B cell (primary cell): ENCODE measurements at regions of chr1 and their contacts with region 1.

Region 1: DNA sequence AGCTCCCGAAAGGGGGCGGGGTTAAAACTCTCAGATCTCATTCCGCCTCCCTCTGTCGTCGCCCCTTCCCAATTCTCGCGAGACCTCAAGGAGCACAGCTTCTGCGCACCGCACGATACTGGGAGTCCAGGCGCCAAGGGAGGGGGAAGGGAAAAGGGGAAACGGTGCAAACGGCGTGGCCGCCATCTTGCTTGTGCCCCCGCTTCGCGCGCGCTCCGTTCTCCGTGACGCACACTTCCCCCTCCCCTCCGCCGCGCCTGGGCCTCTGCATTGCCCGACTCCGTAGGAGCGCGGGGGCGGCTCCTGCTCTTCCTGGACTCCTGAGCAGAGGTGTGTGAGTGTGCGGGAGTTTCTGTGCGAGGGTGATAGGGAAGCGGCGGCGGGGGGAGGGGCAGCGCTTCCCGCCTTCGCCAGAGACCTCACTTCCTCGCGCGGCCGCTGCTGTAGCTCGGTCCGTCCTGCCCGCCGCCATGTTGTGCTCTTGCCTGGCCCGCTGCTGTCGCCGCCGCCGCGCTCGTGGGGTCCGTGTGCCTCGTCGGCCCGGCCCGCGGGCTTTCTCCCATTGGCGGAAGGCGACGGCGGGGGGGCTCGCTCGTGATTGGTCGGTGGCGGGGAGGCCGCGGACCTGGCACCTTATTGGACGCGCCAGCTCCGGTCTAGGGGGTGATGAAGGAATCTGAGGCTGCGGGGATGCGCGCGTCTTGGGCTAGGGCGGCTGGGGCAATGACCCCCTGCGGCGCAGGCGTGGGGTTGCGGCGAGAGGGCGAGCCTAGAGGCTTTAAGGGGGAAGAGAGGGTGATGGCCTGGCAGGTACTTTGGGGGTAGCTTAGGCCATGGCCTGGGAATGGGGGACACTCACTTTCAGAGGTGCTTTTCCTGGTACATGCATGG is at the start of gene NFYC:
- DNase-seq: peak; percentile 99
- ATAC-seq: peak; percentile 78
- H3K4me3 ChIP-seq: peak within 1 kb of the TSS; percentile 75 to 94 (median 91)
- H3K4me3 Mint-ChIP-seq: peak within 1 kb of the TSS; percentile 98
- H3K27ac ChIP-seq: peak within 1 kb of the TSS; percentile 99 to 100
- H3K27ac Mint-ChIP-seq: peak within 1 kb of the TSS; percentile 97
- H3K4me1 ChIP-seq: peaks cover 35 to 44% of the 10 kb centered on the region in 2 donors
- H3K4me1 Mint-ChIP-seq: peaks cover 66% of the 10 kb centered on the region
- H3K27me3 ChIP-seq: no peaks in the 10 kb centered on the region
- H3K27me3 Mint-ChIP-seq: no peaks in the 10 kb centered on the region
- CTCF ChIP-seq: no peak
- total RNA-seq, gene NFYC: 81.1 and 88.7 TPM in 2 replicates

Region 2: GRCh38 chr1:40385437-40386358 is 306.1 kb before region 1 on chr1:
- CTCF ChIA-PET with region 1: no interaction called
- POLR2A ChIA-PET with region 1: no interaction called
- intact Hi-C with region 1: loop called (anchors 10 kb)
- DNase-seq: peak; percentile 94
- ATAC-seq: peak; percentile 73
- H3K4me3 ChIP-seq: peak overlapping the region; percentile 30 to 70 (median 31)
- H3K4me3 Mint-ChIP-seq: peak overlapping the region; percentile 87
- H3K27ac ChIP-seq: peak overlapping the region; percentile 99 to 100
- H3K27ac Mint-ChIP-seq: peak overlapping the region; percentile 97
- H3K4me1 ChIP-seq: peaks cover 94 to 98% of the 10 kb centered on the region in 2 donors
- H3K4me1 Mint-ChIP-seq: peaks cover 91% of the 10 kb centered on the region
- H3K27me3 ChIP-seq: no peaks in the 10 kb centered on the region
- H3K27me3 Mint-ChIP-seq: no peaks in the 10 kb centered on the region
- CTCF ChIP-seq: no peak

Region 3: DNA sequence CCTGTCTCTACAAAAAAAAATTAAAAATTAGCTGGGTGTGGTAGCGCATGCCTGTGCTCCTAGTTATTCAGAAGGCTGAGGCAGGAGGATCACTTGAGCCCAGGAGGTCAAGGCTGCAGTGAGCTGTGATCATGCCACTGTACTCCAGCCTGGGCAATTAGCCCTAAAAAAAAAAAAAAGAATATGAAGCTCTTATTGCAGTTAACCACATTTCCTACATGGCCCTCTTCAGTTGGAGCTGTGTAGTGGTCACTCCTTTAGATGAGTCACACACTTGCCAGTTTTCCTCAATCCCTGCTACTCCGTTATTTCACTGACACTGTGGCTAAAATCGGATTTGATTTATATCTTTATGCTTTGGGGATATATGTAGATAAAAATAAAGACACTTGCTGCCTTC is 11.5 kb after region 1 on chr1:
- CTCF ChIA-PET with region 1: interaction called, 11 read pairs
- POLR2A ChIA-PET with region 1: interaction called, 9 read pairs
- intact Hi-C with region 1: no loop called
- DNase-seq: no peak
- ATAC-seq: no peak
- H3K4me3 ChIP-seq: no peak overlapping the region
- H3K4me3 Mint-ChIP-seq: no peak overlapping the region
- H3K27ac ChIP-seq: no peak overlapping the region
- H3K27ac Mint-ChIP-seq: no peak overlapping the region
- H3K4me1 ChIP-seq: peaks cover 47 to 71% of the 10 kb centered on the region in 2 donors
- H3K4me1 Mint-ChIP-seq: peaks cover 71% of the 10 kb centered on the region
- H3K27me3 ChIP-seq: no peaks in the 10 kb centered on the region
- H3K27me3 Mint-ChIP-seq: no peaks in the 10 kb centered on the region
- CTCF ChIP-seq: no peak

Region 4: DNA sequence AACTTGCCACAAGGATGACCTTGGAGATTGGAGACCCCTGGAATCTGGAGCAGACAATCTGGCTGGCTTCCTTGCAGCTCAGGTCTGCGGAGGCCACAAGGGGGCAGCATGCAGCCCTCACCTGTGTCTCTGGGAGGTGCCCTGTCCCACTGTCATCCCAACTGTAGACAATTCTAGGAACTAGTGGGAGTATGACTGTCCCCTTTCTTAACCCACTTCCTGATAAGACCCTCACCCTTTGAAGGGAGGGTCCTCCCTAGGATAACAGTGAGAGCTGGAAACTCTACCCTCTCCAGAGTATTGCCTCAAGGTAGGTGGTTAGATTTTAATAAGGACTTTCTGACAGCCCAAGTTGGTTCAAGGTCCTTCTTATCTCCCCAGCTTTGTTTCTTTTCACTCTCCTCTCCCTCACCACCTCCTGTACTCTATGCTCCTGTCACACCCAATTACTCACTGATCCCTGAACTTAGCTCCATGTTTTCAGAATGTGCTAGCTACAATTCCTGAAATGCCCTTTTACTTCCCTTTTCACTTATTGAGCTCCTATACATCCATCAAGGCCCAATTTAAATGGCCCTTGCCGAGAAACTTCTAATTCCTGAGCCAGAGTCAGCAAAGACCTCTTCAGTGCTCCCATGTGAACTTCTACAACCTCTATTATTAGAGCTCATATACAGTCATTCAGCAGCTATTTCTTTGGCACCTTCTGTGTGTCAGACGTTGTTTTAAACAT is 82.6 kb after region 1 on chr1:
- CTCF ChIA-PET with region 1: interaction called, 31 read pairs
- POLR2A ChIA-PET with region 1: no interaction called
- intact Hi-C with region 1: no loop called
- DNase-seq: peak; percentile 73
- ATAC-seq: peak; percentile 49
- H3K4me3 ChIP-seq: no peak overlapping the region
- H3K4me3 Mint-ChIP-seq: no peak overlapping the region
- H3K27ac ChIP-seq: no peak overlapping the region
- H3K27ac Mint-ChIP-seq: no peak overlapping the region
- H3K4me1 ChIP-seq: no peaks in the 10 kb centered on the region
- H3K4me1 Mint-ChIP-seq: peaks cover 2% of the 10 kb centered on the region
- H3K27me3 ChIP-seq: no peaks in the 10 kb centered on the region
- H3K27me3 Mint-ChIP-seq: no peaks in the 10 kb centered on the region
- CTCF ChIP-seq: peak; percentile 85

Region 5: DNA sequence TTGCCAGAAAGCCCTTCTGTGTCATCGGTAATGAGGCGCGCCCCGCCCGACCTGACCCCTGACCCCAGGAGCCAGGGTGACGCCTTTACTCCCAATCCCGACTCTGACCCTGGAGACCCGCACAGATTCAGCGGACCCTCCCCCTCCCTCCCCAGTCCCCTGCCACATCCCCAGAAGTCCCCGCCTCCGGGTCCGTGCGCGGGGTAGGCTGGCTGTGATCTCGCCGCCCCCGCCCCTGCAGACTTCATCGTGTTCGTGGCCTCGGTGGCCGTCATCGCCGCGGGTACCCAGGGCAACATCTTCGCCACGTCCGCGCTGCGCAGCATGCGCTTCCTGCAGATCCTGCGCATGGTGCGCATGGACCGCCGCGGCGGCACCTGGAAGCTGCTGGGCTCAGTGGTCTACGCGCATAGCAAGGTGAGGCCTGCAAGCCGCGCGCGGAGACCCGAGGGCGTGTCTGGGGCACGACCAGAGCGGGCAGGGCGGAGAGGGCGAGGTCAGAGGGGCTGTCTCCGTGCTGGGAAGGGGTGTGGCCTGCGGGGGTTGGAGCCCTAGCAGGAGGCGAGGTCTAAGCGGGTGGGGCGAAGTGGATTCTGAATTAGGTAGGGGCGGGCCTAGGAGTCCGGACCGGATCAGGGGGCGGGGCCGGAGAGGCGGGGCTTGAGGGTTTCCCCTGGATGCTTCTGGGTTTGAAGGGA is 126.6 kb after region 1 on chr1:
- CTCF ChIA-PET with region 1: interaction called, 3 read pairs
- POLR2A ChIA-PET with region 1: no interaction called
- intact Hi-C with region 1: loop called (anchors 5 kb)
- DNase-seq: peak; percentile 91
- ATAC-seq: peak; percentile 99
- H3K4me3 ChIP-seq: peak overlapping the region; percentile 5 to 77 (median 62)
- H3K4me3 Mint-ChIP-seq: peak overlapping the region; percentile 88
- H3K27ac ChIP-seq: peak overlapping the region in 1 of 2 donors; percentile 10
- H3K27ac Mint-ChIP-seq: peak overlapping the region; percentile 79
- H3K4me1 ChIP-seq: peaks cover 0 to 11% of the 10 kb centered on the region in 2 donors
- H3K4me1 Mint-ChIP-seq: peaks cover 11% of the 10 kb centered on the region
- H3K27me3 ChIP-seq: peaks cover 0 to 6% (median 0%) of the 10 kb centered on the region in 4 experiments
- H3K27me3 Mint-ChIP-seq: no peaks in the 10 kb centered on the region
- CTCF ChIP-seq: no peak